Naive thymus-derived CD4-positive, alpha-beta T cell (primary cell): ENCODE measurements at regions of chr11 and their contacts with region 1.

Region 1: GRCh38 chr11:62601394-62602140 is at the start of gene MTA2:
- DNase-seq: peak; percentile 98 to 100 (median 100)
- ATAC-seq: peak; percentile 85
- H3K4me3 ChIP-seq: peak within 1 kb of the TSS; percentile 71
- H3K4me3 Mint-ChIP-seq: peak within 1 kb of the TSS; percentile 85 to 99 (median 94)
- H3K27ac ChIP-seq: peak within 1 kb of the TSS; percentile 98
- H3K27ac Mint-ChIP-seq: peak within 1 kb of the TSS; percentile 90 to 98 (median 97)
- H3K4me1 ChIP-seq: peaks cover 16 to 23% of the 10 kb centered on the region in 2 donors
- H3K4me1 Mint-ChIP-seq: peaks cover 43 to 64% (median 54%) of the 10 kb centered on the region in 7 donors
- H3K27me3 ChIP-seq: no peaks in the 10 kb centered on the region
- H3K27me3 Mint-ChIP-seq: no peaks in the 10 kb centered on the region
- total RNA-seq, gene MTA2: 134 to 238 (median 199) TPM

Region 2: DNA sequence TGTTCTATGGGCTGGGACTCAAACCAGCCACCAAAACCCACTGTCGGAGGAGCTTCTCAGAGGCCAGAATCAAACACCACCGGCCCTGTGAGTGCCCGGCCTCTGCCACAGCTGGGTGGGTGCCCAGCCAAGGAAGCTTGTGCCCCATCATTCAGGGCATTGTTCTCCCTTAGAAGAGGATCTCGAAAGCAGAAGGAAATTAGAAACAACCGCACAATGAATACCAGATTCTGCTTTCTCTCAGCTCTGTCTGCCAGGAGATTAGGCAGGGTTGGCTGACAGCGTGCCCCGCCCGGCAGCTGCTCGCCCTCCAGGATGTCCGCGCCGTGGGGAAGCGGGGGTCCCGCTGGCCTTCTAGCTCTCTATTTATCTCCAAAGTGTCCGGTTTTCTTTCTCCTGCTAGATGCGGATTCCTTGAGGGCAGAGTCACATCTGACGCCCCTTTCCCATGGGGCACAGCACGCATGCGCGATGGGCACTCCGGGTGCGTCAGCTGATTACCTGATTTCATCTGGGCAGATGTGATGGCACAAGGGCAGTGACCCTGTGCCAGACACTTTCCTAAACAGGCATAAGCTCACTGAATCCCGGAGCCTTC is 157.2 kb before region 1 on chr11:
- CTCF ChIA-PET with region 1: no interaction called
- POLR2A ChIA-PET with region 1: no interaction called
- intact Hi-C with region 1: no loop called
- DNase-seq: peak in 8 of 9 donors; percentile 10 to 44 (median 30)
- ATAC-seq: peak; percentile 86
- H3K4me3 ChIP-seq: peak overlapping the region; percentile 50
- H3K4me3 Mint-ChIP-seq: peak overlapping the region; percentile 70 to 85 (median 78)
- H3K27ac ChIP-seq: no peak overlapping the region
- H3K27ac Mint-ChIP-seq: peak overlapping the region in 6 of 9 donors; percentile 18 to 61 (median 37)
- H3K4me1 ChIP-seq: peaks cover 0 to 14% of the 10 kb centered on the region in 2 donors
- H3K4me1 Mint-ChIP-seq: peaks cover 0 to 18% (median 9%) of the 10 kb centered on the region in 7 donors
- H3K27me3 ChIP-seq: no peaks in the 10 kb centered on the region
- H3K27me3 Mint-ChIP-seq: peaks cover 14 to 32% (median 24%) of the 10 kb centered on the region in 5 donors

Region 3: GRCh38 chr11:62573592-62574362 is 27.8 kb before region 1 on chr11 and contains the start of gene EEF1G:
- CTCF ChIA-PET with region 1: no interaction called
- POLR2A ChIA-PET with region 1: interaction called, 10 read pairs
- intact Hi-C with region 1: loop called in 1 of 2 experiments (anchors 1 kb)
- DNase-seq: peak; percentile 88 to 100 (median 99)
- ATAC-seq: peak; percentile 96
- H3K4me3 ChIP-seq: peak within 1 kb of the TSS; percentile 82
- H3K4me3 Mint-ChIP-seq: peak within 1 kb of the TSS; percentile 94 to 100 (median 97)
- H3K27ac ChIP-seq: peak within 1 kb of the TSS; percentile 88
- H3K27ac Mint-ChIP-seq: peak within 1 kb of the TSS; percentile 81 to 98 (median 95)
- H3K4me1 ChIP-seq: peaks cover 8 to 11% of the 10 kb centered on the region in 2 donors
- H3K4me1 Mint-ChIP-seq: peaks cover 39 to 61% (median 45%) of the 10 kb centered on the region in 7 donors
- H3K27me3 ChIP-seq: no peaks in the 10 kb centered on the region
- H3K27me3 Mint-ChIP-seq: no peaks in the 10 kb centered on the region
- total RNA-seq, gene EEF1G: 1,186 to 2,550 (median 2,338) TPM

Region 4: DNA sequence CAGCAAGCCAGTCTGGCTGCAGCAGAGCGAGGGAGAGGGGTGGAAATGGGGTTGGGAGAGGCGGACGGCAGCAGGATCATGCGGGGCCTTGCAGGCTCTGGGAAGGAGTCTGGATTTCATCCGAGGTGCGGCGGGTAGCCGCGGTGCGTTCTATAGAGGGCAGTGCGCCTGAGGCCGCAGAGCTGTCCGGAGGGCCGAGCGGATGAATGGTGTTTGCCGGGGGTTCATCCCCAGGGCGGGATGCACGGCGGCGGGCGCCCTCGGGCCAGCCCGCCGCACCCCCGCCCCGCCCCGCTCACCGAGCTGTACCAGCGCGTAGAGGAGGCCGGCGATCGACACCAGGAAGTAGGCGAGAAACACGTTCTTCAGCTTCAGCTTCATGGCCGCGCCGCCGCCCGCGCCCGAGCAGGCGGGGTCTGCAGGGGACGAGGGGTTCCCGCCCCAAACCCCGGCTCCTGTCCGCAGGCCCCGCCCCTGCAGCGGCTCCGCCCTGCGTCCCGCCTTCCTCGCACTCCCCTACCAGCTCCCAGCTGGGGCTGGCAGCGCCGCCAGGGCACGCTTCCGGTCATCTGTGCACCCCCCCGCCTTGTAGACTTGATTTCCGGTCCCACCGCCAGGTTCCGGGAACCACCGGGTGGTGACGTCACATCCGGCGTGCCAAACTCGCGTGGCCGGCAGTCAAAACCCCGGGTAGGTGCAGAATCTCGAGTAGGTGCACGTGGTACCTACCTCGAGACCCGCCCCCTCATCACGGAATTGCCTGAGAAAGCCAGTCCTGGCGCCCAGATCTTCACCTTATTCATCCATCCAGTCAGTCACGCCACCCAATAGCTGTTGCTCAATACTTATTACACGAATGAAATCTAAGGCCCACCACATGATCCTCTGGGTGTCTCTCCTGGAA is 20.3 kb after region 1 on chr11 and contains the start of gene B3GAT3:
- CTCF ChIA-PET with region 1: interaction called, 4 read pairs
- POLR2A ChIA-PET with region 1: interaction called, 70 read pairs
- intact Hi-C with region 1: loop called (anchors 1 kb)
- DNase-seq: peak; percentile 87 to 97 (median 94)
- ATAC-seq: peak; percentile 93
- H3K4me3 ChIP-seq: peak within 1 kb of the TSS; percentile 97
- H3K4me3 Mint-ChIP-seq: peak within 1 kb of the TSS; percentile 91 to 99 (median 94)
- H3K27ac ChIP-seq: peak within 1 kb of the TSS; percentile 92
- H3K27ac Mint-ChIP-seq: peak within 1 kb of the TSS; percentile 92 to 99 (median 96)
- H3K4me1 ChIP-seq: peaks cover 11% of the 10 kb centered on the region in 2 donors
- H3K4me1 Mint-ChIP-seq: peaks cover 13 to 29% (median 26%) of the 10 kb centered on the region in 7 donors
- H3K27me3 ChIP-seq: no peaks in the 10 kb centered on the region
- H3K27me3 Mint-ChIP-seq: no peaks in the 10 kb centered on the region
- total RNA-seq, gene B3GAT3: 55.8 to 78.1 (median 71.2) TPM

Region 5: DNA sequence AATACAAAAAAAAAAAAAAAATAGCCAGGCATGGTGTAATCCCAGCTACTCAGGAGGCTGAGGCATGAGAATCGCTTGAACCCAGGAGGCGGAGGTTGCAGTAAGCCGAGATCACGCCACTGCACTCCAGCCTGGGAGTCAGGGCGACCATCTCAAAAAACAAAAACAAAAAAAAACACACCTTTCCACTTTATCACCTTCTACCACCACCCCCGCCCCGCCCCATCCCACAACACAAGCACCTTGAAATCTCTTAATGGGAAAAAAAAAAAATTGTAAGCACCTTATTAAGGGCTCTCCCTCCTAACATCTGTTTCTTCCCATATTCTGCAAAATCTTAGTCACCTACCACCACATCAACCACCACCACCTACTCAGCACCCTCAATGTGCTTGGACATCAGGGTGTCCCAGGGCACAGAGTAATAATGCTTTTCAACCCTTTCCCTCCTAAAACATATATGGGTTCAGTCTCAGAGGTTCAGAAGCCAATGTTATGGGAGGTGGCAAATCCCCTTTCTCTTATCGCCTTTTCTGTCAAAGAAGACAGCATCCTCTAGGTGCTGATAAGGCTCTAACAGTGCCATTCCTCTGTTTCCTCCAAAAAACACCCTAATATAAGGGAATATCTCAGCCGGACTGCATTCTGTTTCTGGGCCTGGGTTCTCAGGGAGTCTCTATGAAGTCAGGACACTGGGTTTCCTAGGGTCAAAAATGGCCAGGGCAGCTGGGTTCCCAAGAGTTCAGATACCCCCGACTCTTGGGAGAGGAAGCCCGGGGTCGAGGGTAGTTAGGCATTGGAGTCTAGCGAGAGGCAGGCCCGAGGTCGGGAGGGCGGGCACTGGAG is 50.8 kb after region 1 on chr11:
- CTCF ChIA-PET with region 1: interaction called, 3 read pairs
- POLR2A ChIA-PET with region 1: interaction called, 32 read pairs
- intact Hi-C with region 1: loop called (anchors 1 to 2 kb)
- DNase-seq: peak in 4 of 9 donors; percentile 13 to 59 (median 22)
- ATAC-seq: no peak
- H3K4me3 ChIP-seq: peak overlapping the region; percentile 87
- H3K4me3 Mint-ChIP-seq: peak overlapping the region; percentile 75 to 94 (median 90)
- H3K27ac ChIP-seq: peak overlapping the region; percentile 95
- H3K27ac Mint-ChIP-seq: peak overlapping the region; percentile 88 to 98 (median 96)
- H3K4me1 ChIP-seq: peaks cover 13 to 16% of the 10 kb centered on the region in 2 donors
- H3K4me1 Mint-ChIP-seq: peaks cover 11 to 36% (median 22%) of the 10 kb centered on the region in 7 donors
- H3K27me3 ChIP-seq: no peaks in the 10 kb centered on the region
- H3K27me3 Mint-ChIP-seq: no peaks in the 10 kb centered on the region

Region 6: DNA sequence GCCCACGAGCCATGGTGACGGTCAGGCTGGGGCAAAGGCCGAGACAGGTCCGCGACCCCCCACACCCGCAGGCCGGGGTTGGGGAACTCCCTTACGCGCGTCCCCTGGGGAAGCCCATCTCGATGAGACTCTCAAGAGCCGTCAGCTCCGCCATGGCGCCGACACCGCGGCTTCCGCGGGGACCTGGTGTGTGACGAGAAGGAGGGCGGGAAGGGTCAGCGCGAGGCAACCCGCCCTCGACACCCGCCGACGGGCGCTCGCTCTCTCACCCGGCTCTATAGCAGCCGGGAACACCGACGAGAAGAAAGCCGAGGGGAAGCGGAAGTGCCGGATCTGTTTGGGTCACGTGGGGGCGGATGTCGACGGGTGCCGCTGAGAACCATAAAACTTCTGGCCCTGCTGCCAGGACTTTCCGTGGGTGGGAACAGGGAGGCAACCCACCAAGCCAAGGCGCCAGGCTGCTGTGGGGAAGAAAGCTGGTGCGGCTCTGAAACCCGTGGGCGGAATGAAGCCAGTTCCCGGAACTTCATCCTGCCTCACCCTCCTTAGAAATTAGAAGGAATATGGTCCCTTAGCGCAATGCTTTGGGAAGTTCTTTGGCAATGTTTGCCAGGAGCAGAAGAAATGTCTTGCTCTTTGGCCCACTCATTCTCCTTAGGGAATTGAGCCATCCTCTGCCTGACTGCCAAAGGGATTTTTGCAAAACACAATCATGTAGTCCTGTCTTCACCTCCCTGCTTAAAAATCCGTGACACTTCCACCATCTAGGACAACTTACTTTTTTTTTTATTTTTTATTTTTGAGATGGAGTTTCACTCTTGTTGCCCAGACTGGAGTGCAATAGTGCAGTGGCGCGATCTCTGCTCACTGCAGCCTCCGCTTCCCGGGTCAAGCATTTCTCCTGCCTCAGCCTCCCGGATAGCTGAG is 77.5 kb after region 1 on chr11 and contains the start of gene UBXN1:
- CTCF ChIA-PET with region 1: interaction called, 4 read pairs
- POLR2A ChIA-PET with region 1: interaction called, 269 read pairs
- intact Hi-C with region 1: loop called in 1 of 2 experiments (anchors 1 kb)
- DNase-seq: peak; percentile 63 to 84 (median 81)
- ATAC-seq: peak; percentile 91
- H3K4me3 ChIP-seq: peak within 1 kb of the TSS; percentile 87
- H3K4me3 Mint-ChIP-seq: peak within 1 kb of the TSS; percentile 86 to 93 (median 90)
- H3K27ac ChIP-seq: peak within 1 kb of the TSS; percentile 98
- H3K27ac Mint-ChIP-seq: peak within 1 kb of the TSS; percentile 88 to 98 (median 94)
- H3K4me1 ChIP-seq: peaks cover 13 to 15% of the 10 kb centered on the region in 2 donors
- H3K4me1 Mint-ChIP-seq: peaks cover 19 to 41% (median 37%) of the 10 kb centered on the region in 7 donors
- H3K27me3 ChIP-seq: no peaks in the 10 kb centered on the region
- H3K27me3 Mint-ChIP-seq: no peaks in the 10 kb centered on the region
- total RNA-seq, gene UBXN1: 114 to 215 (median 207) TPM

Region 7: GRCh38 chr11:62771144-62772021 is 169.8 kb after region 1 on chr11 and contains the start of gene TAF6L:
- CTCF ChIA-PET with region 1: no interaction called
- POLR2A ChIA-PET with region 1: no interaction called
- intact Hi-C with region 1: loop called in 1 of 2 experiments (anchors 1 kb)
- DNase-seq: peak; percentile 80 to 98 (median 82)
- ATAC-seq: peak; percentile 92
- H3K4me3 ChIP-seq: peak within 1 kb of the TSS; percentile 66
- H3K4me3 Mint-ChIP-seq: peak within 1 kb of the TSS; percentile 88 to 98 (median 94)
- H3K27ac ChIP-seq: peak within 1 kb of the TSS; percentile 82
- H3K27ac Mint-ChIP-seq: peak within 1 kb of the TSS; percentile 89 to 97 (median 94)
- H3K4me1 ChIP-seq: peaks cover 10 to 13% of the 10 kb centered on the region in 2 donors
- H3K4me1 Mint-ChIP-seq: peaks cover 17 to 37% (median 27%) of the 10 kb centered on the region in 7 donors
- H3K27me3 ChIP-seq: no peaks in the 10 kb centered on the region
- H3K27me3 Mint-ChIP-seq: no peaks in the 10 kb centered on the region
- total RNA-seq, gene TAF6L: 13.1 to 34.9 (median 24.1) TPM

Region 8: DNA sequence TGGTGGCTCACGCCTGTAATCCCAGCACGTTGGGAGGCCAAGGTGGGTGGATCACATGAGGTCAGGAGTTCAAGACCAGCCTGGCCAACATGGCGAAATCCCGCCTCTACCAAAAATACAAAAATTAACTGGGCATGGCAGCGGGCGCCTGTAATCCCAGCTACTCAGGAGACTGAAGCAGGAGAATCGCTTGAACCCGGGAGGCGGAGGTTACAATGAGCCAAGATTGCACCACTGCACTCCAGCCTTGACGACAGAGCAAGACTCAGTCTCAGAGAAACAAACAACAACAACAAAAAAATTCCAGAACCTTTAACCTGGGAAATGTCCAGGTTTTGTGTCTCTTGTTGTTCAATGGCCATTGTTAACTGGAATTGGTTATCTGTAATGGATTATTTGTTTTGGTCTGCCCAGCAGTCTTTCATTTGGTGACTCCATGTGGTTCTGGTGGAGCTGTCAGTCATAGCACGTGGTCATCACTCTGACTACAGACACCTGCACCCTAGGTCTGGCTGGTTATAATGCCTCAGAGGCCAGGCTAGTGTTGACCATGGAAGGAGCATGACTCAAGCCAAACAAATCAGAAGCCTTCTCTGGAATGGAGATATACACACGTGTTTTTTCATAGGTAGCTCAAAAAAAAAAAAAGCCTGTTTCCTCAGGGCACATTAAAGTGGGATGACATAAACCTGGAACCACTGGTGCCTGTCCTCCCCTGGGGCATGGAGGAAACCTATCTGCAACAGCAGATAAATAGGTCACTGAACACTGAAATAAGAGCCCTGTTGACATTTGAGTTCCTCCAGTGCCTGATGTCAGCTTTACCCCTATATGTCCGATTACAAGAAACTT is 1020.6 kb after region 1 on chr11:
- CTCF ChIA-PET with region 1: no interaction called
- POLR2A ChIA-PET with region 1: no interaction called
- intact Hi-C with region 1: no loop called
- DNase-seq: no peak
- ATAC-seq: no peak
- H3K4me3 ChIP-seq: no peak overlapping the region
- H3K4me3 Mint-ChIP-seq: no peak overlapping the region
- H3K27ac ChIP-seq: no peak overlapping the region
- H3K27ac Mint-ChIP-seq: no peak overlapping the region
- H3K4me1 ChIP-seq: no peaks in the 10 kb centered on the region
- H3K4me1 Mint-ChIP-seq: peaks cover 0 to 9% (median 7%) of the 10 kb centered on the region in 7 donors
- H3K27me3 ChIP-seq: no peaks in the 10 kb centered on the region
- H3K27me3 Mint-ChIP-seq: peaks cover 0 to 5% (median 0%) of the 10 kb centered on the region in 5 donors